Heart left ventricle (tissue), 16 donors: ENCODE measurements at regions of chr10 and their contacts with region 1.

Region 1: DNA sequence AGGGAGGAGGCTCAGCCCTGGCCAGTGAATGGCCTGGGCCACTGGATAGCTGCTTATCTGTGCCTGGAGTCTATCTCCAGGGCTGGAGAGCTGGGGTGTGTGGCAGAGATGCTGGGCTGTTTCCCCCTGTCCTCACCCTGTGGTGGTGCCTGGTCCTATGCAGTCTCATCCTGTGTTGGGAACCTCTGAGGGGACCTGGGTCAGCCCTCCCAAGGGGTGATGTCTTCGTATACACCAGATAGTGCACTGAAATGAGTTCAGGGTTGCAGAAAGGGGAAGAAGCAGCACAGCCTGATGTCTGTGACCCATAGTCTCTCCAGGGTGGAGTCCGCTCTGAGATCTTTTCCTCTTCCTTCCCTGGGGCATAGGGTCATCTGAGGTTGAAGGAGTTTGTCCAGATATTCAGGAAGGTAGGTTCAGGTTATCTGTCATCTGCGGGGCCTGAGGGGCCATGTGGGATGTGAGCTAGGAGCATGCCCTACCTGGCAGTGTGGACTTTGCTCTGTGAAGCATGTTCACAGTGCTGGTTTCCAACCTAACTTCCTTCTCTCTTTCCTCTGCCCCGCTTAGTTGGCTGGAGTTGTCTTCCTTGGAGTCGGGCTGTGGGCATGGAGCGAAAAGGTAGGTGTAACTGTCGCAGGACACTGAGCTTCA is 33.4 kb upstream of the SH2D4B start:
- DNase-seq: peak in 1 of 5 donors; percentile 23
- ATAC-seq: peak in 3 of 4 donors; percentile 7 to 37 (median 34)
- H3K4me3 ChIP-seq: no peak overlapping the region
- H3K27ac ChIP-seq: peak overlapping the region; percentile 19 to 95 (median 79)
- H3K4me1 ChIP-seq: peaks cover 34 to 100% (median 92%) of the 10 kb centered on the region in 12 donors
- H3K27me3 ChIP-seq: no peaks in the 10 kb centered on the region
- CTCF ChIP-seq: no peak
- POLR2A ChIP-seq: no peak

Region 2: GRCh38 chr10:80437231-80437630 is 67.1 kb before region 1 on chr10:
- intact Hi-C with region 1: no loop called
- DNase-seq: no peak
- ATAC-seq: no peak
- H3K4me3 ChIP-seq: no peak overlapping the region
- H3K27ac ChIP-seq: no peak overlapping the region
- H3K4me1 ChIP-seq: no peaks in the 10 kb centered on the region
- H3K27me3 ChIP-seq: no peaks in the 10 kb centered on the region
- CTCF ChIP-seq: no peak
- POLR2A ChIP-seq: no peak

Region 3: DNA sequence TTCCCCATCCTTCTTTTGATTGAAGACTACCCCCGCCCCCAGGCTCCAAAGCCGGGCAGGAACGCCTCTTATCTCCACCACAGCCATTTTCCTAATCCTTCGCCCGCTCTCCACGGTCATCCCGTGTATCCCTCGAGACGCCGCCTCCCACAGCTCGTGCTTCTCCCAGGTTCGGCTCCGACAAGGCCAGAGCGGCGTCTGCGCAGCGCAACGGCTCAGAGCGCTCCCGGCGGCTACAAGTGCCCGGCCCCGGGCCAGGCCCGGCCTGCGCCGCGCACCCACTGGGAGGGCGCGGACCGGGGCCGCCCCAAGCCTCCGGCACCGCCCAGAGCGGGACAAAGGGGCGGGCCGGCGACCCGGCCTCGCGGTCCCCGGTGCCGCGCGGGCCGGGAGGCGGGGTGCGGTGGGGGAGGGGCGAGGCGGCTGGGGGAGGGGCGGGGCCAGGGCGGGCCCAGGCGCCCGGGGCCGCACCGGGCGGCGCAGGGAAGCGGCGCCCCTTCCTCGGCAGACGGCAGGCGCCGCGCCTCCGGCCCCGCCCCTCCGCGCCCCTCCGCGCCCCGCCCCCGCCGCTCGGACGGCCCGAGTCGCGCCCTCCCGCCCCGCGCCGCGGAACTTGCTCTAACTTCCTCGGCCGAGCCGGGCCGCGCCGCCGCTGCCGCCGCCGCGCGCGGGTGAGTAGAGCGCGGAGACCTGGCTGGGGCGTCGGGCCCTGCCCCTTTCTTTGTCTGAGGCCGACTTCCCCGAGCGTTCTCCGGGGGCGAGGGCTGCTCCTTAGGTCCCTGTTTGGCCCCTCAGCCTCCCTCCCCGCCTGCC is 50.4 kb before region 1 on chr10 and contains the start of gene TSPAN14:
- intact Hi-C with region 1: loop called in 6 of 10 experiments (anchors 2 to 5 kb)
- DNase-seq: peak; percentile 88 to 93 (median 91)
- ATAC-seq: peak; percentile 82 to 92 (median 90)
- H3K4me3 ChIP-seq: peak within 1 kb of the TSS; percentile 64 to 100 (median 95)
- H3K27ac ChIP-seq: peak within 1 kb of the TSS; percentile 93 to 100 (median 99)
- H3K4me1 ChIP-seq: peaks cover 3 to 77% (median 36%) of the 10 kb centered on the region in 12 donors
- H3K27me3 ChIP-seq: no peaks in the 10 kb centered on the region
- CTCF ChIP-seq: peak in 1 of 12 donors; percentile 7
- POLR2A ChIP-seq: peak in 1 of 2 donors; percentile 67
- total RNA-seq, gene TSPAN14: 24.6 to 71.5 (median 39.6) TPM

Region 4: GRCh38 chr10:80459047-80459931 is 45.0 kb before region 1 on chr10:
- intact Hi-C with region 1: loop called in 5 of 10 experiments (anchors 2 to 5 kb)
- DNase-seq: peak; percentile 65 to 80 (median 74)
- ATAC-seq: peak in 3 of 4 donors; percentile 22 to 55 (median 53)
- H3K4me3 ChIP-seq: peak overlapping the region in 9 of 12 donors; percentile 3 to 98 (median 24)
- H3K27ac ChIP-seq: peak overlapping the region; percentile 20 to 99 (median 78)
- H3K4me1 ChIP-seq: peaks cover 23 to 91% (median 81%) of the 10 kb centered on the region in 12 donors
- H3K27me3 ChIP-seq: no peaks in the 10 kb centered on the region
- CTCF ChIP-seq: peak in 1 of 12 donors; percentile 8
- POLR2A ChIP-seq: peak in 1 of 2 donors; percentile 45

Region 5: GRCh38 chr10:80468002-80468401 is 36.3 kb before region 1 on chr10:
- intact Hi-C with region 1: loop called in 2 of 10 experiments (anchors 2 kb)
- DNase-seq: peak; percentile 77 to 88 (median 85)
- ATAC-seq: peak; percentile 78 to 95 (median 86)
- H3K4me3 ChIP-seq: peak overlapping the region in 9 of 12 donors; percentile 5 to 40 (median 20)
- H3K27ac ChIP-seq: peak overlapping the region; percentile 55 to 99 (median 82)
- H3K4me1 ChIP-seq: peaks cover 21 to 100% (median 85%) of the 10 kb centered on the region in 12 donors
- H3K27me3 ChIP-seq: no peaks in the 10 kb centered on the region
- CTCF ChIP-seq: peak in 2 of 12 donors; percentile 19 to 27
- POLR2A ChIP-seq: no peak